ENCODE measurements at regions of chr6 and their contacts with region 1.

Region 1: GRCh38 chr6:157292202-157292601 is 31.1 kb downstream of the TMEM242 start:
- DNase-seq: no peak
- ATAC-seq: no peak
- H3K4me3 Mint-ChIP-seq: no peak overlapping the region
- H3K27ac Mint-ChIP-seq: no peak overlapping the region
- H3K4me1 Mint-ChIP-seq: peaks cover 6% of the 10 kb centered on the region
- H3K27me3 Mint-ChIP-seq: no peaks in the 10 kb centered on the region

Region 2: DNA sequence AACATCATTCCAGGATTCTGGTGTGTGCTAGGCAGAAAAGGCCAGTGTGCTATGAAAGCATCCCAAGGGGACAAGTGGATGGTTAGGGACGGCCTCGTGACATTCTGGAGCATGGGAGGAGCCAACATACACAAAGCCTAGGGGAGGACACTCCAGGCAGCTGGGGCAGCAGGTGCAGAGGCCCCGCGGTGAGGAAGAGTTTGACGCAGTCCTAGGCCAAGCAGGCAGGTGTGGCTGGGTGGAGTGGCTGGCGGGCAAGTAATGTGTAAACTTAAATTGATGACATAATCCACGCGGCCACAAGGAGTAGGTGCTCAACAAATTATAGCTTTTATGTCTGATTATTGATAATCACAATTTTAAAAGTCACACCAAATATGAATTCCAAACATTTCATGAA is 62.5 kb before region 1 on chr6:
- CTCF ChIA-PET with region 1: no interaction called
- POLR2A ChIA-PET with region 1: no interaction called
- intact Hi-C with region 1: loop called in 1 of 2 experiments (anchors 5 kb)
- DNase-seq: no peak
- ATAC-seq: no peak
- H3K4me3 Mint-ChIP-seq: no peak overlapping the region
- H3K27ac Mint-ChIP-seq: no peak overlapping the region
- H3K4me1 Mint-ChIP-seq: peaks cover 27% of the 10 kb centered on the region
- H3K27me3 Mint-ChIP-seq: peaks cover 13% of the 10 kb centered on the region

Region 3: DNA sequence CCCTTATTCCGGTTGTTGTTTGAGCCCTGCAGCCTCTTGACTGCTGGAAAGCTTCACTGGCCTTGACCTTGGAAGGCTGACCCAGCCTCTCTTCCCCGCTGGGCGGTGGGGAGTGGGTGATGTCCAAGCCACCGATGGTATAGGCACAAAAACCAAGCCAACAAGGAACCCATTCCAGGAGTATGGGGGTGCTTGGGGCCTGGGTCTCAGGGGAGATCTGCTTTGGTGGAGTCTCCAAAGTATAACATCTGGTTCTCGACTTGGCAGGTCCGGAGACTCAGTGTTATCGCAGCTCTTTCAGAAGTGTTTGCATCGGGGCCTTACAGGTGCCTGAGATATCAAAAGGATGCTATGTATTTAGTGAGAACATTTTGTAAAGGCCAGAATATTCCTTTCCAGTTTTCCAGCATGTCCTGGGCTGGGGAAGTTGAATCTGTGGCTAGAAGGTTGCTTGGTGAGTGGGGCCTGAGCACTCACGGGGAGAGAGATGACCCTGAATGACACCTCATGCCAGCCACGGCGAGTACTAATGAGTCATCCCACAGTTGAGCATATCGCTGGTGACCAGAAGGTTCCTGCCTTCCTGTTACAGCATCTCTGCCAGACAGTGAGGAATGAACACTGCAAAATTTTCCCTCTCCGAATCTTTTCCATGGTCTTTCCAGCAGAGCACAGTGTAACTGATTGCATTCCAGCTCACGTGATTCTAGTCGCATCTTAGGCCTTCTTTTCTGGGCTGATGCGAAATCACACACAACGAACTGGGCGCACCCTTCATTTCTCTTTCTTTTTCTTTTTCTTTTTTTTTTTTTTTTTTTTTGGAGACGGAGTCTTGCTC is 222.7 kb after region 1 on chr6:
- CTCF ChIA-PET with region 1: no interaction called
- POLR2A ChIA-PET with region 1: no interaction called
- intact Hi-C with region 1: no loop called
- DNase-seq: peak; percentile 21
- ATAC-seq: peak; percentile 53
- H3K4me3 Mint-ChIP-seq: no peak overlapping the region
- H3K27ac Mint-ChIP-seq: no peak overlapping the region
- H3K4me1 Mint-ChIP-seq: peaks cover 4% of the 10 kb centered on the region
- H3K27me3 Mint-ChIP-seq: no peaks in the 10 kb centered on the region

Measured in activated CD4-positive, alpha-beta T cell treated with anti-CD3 and anti-CD28 coated beads for 36 hours (primary cell).